Psoas muscle (tissue), 8 donors: ENCODE measurements at regions of chr1 and their contacts with region 1.

Region 1: GRCh38 chr1:41239988-41240610 is 2.0 kb downstream of the SCMH1 start:
- DNase-seq: no peak
- ATAC-seq: no peak
- H3K4me3 ChIP-seq: peak overlapping the region; percentile 96
- H3K27ac ChIP-seq: peak overlapping the region; percentile 94
- H3K4me1 ChIP-seq: peaks cover 15% of the 10 kb centered on the region
- H3K27me3 ChIP-seq: no peaks in the 10 kb centered on the region
- CTCF ChIP-seq: no peak

Region 2: GRCh38 chr1:41013796-41014195 is 226.3 kb before region 1 on chr1:
- intact Hi-C with region 1: loop called in 1 of 2 experiments (anchors 10 kb)
- DNase-seq: no peak
- ATAC-seq: peak in 1 of 4 donors; percentile 41
- H3K4me3 ChIP-seq: no peak overlapping the region
- H3K27ac ChIP-seq: no peak overlapping the region
- H3K4me1 ChIP-seq: no peaks in the 10 kb centered on the region
- H3K27me3 ChIP-seq: no peaks in the 10 kb centered on the region
- CTCF ChIP-seq: no peak